ENCODE measurements at regions of chr10 and their contacts with region 1.

Region 1: DNA sequence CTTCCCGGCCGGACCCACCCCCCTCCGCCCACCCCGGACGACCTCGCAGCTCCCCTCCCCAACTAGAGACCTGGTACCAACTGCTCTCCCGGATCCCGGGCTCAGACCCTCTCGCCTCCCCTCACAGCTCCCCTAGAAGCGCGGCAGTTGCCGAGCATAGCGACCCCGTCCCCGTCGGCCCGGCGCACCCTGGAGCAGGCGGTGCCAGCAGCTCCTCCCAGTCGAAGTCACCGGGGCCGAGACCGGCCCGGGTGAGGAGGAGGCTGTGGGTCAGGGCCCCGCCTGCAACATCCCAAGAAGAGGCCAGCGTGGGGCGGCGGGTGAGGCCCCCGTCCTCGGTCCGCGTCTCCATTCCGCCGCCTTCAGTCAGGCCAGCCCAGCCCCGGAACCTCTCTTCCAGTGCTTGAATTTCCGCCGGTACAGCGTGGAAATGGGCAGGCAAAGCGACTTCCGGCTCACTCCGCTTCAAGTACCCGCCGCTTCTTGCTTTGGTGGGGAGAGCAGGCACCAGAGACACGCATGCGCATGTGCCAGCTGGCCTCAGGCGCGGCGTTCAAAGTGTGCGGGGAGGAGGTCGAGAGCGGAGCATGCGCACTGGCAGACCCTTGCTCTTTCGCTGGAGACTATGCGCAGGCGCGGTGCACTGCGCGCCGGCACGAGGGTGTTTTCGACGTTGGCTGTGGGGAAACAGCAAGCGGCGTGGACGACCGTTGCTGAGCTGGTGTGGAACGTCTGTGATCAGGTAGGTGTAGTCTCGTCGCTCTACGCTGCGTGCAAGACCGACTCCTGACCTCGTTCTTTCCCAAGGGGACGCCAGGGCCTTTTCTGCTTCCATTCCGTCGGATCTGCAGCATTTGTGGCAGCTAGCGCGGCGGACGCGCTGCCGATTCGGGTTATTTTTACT is at the start of gene C10orf88:
- DNase-seq: peak; percentile 95
- H3K4me3 ChIP-seq: peak within 1 kb of the TSS; percentile 90
- H3K27ac ChIP-seq: peak within 1 kb of the TSS; percentile 48
- H3K4me1 ChIP-seq: peaks cover 11% of the 10 kb centered on the region
- CTCF ChIP-seq: no peak
- total RNA-seq, gene C10orf88: 5.5 and 8.0 TPM in 2 replicates

Region 2: DNA sequence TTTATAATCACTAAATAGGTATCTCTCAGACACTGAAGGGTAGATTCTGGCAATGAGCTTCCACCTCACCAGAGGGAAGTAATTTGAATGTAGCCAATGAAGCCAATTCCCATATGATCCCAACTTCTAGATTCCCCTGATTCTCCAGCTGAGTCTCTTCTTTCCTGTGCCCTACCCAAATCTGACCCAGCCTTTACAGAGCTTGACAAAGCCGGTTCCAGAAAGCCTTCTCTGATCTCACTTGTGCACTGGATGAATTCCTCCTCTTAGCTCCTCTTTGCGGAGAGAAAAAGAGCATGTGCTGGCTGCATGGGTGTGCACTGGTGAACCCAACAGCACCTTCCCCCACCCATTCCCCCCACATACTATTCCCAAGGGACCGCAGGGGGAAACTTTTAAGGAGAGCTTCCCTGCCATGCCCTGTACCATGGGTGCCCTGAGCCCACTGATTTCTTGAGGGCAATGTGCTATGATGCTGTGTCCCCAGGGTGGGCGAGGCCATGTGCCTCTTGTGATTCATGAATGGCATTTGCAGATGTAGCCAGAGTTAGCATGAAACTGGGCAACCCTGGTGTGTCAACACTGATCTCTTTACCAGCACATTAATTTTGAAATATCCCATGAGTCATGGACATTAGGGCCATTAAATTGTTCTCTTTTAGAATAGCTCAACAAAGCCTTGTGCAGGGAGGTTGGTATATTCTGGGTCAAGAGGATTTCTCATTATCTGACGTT is 630.0 kb before region 1 on chr10:
- CTCF ChIA-PET with region 1: no interaction called
- POLR2A ChIA-PET with region 1: no interaction called
- intact Hi-C with region 1: no loop called
- DNase-seq: no peak
- H3K4me3 ChIP-seq: no peak overlapping the region
- H3K27ac ChIP-seq: no peak overlapping the region
- H3K4me1 ChIP-seq: peaks cover 17% of the 10 kb centered on the region
- CTCF ChIP-seq: no peak

Region 3: GRCh38 chr10:122879339-122880273 is 74.5 kb before region 1 on chr10 and contains the start of gene FAM24B:
- CTCF ChIA-PET with region 1: no interaction called
- POLR2A ChIA-PET with region 1: no interaction called
- intact Hi-C with region 1: loop called (anchors 2 kb)
- DNase-seq: peak; percentile 93
- H3K4me3 ChIP-seq: peak within 1 kb of the TSS; percentile 79
- H3K27ac ChIP-seq: peak within 1 kb of the TSS; percentile 64
- H3K4me1 ChIP-seq: no peaks in the 10 kb centered on the region
- CTCF ChIP-seq: no peak
- total RNA-seq, gene FAM24B: 8.4 and 11.1 TPM in 2 replicates

Region 4: GRCh38 chr10:122980209-122981065 is 26.4 kb after region 1 on chr10 and contains the start of gene PSTK:
- CTCF ChIA-PET with region 1: interaction called, 3 read pairs
- POLR2A ChIA-PET with region 1: interaction called, 7 read pairs
- intact Hi-C with region 1: loop called (anchors 1 kb)
- DNase-seq: peak; percentile 92
- H3K4me3 ChIP-seq: peak within 1 kb of the TSS; percentile 72
- H3K27ac ChIP-seq: peak within 1 kb of the TSS; percentile 73
- H3K4me1 ChIP-seq: peaks cover 16% of the 10 kb centered on the region
- CTCF ChIP-seq: peak; percentile 74
- total RNA-seq, gene PSTK: 4.9 and 7.4 TPM in 2 replicates

Region 5: DNA sequence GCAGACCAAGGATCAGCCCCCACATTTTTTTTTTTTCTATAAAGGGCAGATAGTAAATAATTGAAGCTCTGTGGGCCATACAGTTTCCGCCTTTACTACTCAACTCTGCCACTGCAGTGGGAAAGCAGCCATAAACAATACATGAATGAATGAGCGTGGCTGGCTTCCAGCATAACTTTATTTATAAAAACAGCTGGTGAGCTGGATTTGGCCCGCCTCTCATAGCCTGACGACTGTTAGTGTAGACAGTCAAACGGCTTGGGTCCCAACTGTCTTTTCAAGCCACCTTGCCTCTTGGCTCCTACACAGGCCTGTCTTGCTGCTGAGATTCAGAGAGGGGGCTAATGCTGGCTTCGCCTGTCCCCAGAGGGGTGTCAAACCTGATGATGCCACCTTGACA is 542.3 kb after region 1 on chr10:
- CTCF ChIA-PET with region 1: no interaction called
- POLR2A ChIA-PET with region 1: no interaction called
- intact Hi-C with region 1: no loop called
- DNase-seq: no peak
- H3K4me3 ChIP-seq: no peak overlapping the region
- H3K27ac ChIP-seq: no peak overlapping the region
- H3K4me1 ChIP-seq: no peaks in the 10 kb centered on the region
- CTCF ChIP-seq: no peak

Measured in OCI-LY7 (cell line).